Psoas muscle (tissue), 8 donors: ENCODE measurements at regions of chr7 and their contacts with region 1.

Region 1: GRCh38 chr7:41977151-41977651 is 259.8 kb downstream of the GLI3 start:
- DNase-seq: peak in 1 of 2 donors; percentile 63
- ATAC-seq: peak; percentile 92 to 97 (median 96)
- H3K4me3 ChIP-seq: no peak overlapping the region
- H3K27ac ChIP-seq: peak overlapping the region; percentile 70
- H3K4me1 ChIP-seq: peaks cover 40% of the 10 kb centered on the region
- H3K27me3 ChIP-seq: no peaks in the 10 kb centered on the region
- CTCF ChIP-seq: peak; percentile 78

Region 2: GRCh38 chr7:41411411-41412120 is 565.6 kb before region 1 on chr7:
- intact Hi-C with region 1: no loop called
- DNase-seq: no peak
- ATAC-seq: no peak
- H3K4me3 ChIP-seq: no peak overlapping the region
- H3K27ac ChIP-seq: no peak overlapping the region
- H3K4me1 ChIP-seq: no peaks in the 10 kb centered on the region
- H3K27me3 ChIP-seq: no peaks in the 10 kb centered on the region
- CTCF ChIP-seq: no peak

Region 3: DNA sequence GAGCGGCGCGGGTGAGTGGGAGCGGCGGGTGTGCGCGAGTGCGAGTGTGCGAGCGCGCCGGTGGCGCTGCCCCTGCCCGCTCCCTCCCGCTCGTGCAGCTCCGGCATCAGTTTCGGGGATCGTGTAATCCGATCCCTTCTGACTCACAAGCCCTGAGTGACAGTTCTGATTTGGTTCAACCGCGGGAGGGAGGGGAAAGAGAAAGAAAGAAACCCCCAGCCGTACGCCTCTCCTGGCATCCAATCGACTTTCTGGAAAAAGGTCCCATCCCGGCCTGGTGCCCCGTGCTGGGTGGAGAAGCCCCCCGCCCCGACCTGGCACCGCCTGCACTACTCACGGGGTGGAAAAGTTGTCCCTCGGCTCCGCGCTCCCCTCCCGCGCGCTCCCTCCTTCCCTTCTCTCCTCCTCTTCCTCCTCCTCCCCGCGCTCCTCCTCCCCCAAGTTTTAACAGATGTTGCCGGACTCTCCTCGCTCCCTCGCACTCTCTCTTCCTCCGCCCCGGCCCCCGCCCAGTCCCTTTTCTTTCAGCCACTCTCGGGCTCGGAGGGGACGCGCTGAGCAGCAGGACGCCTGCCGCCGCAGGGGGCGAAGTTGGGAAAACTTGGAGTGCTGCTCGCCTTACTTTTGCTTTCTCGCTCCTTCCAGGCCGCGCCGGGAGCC is 260.1 kb after region 1 on chr7 and contains the start of gene GLI3:
- intact Hi-C with region 1: loop called in 1 of 2 experiments (anchors 10 kb)
- DNase-seq: peak; percentile 88 to 91
- ATAC-seq: peak; percentile 85 to 92 (median 88)
- H3K4me3 ChIP-seq: peak within 1 kb of the TSS; percentile 69
- H3K27ac ChIP-seq: peak within 1 kb of the TSS; percentile 81
- H3K4me1 ChIP-seq: peaks cover 10% of the 10 kb centered on the region
- H3K27me3 ChIP-seq: no peaks in the 10 kb centered on the region
- CTCF ChIP-seq: peak; percentile 17
- total RNA-seq, gene GLI3: 3.2 to 4.9 (median 4.1) TPM

Region 4: GRCh38 chr7:42311195-42311594 is 334.0 kb after region 1 on chr7:
- intact Hi-C with region 1: loop called in 1 of 2 experiments (anchors 5 kb)
- DNase-seq: no peak
- ATAC-seq: no peak
- H3K4me3 ChIP-seq: no peak overlapping the region
- H3K27ac ChIP-seq: no peak overlapping the region
- H3K4me1 ChIP-seq: no peaks in the 10 kb centered on the region
- H3K27me3 ChIP-seq: no peaks in the 10 kb centered on the region
- CTCF ChIP-seq: no peak

Region 5: DNA sequence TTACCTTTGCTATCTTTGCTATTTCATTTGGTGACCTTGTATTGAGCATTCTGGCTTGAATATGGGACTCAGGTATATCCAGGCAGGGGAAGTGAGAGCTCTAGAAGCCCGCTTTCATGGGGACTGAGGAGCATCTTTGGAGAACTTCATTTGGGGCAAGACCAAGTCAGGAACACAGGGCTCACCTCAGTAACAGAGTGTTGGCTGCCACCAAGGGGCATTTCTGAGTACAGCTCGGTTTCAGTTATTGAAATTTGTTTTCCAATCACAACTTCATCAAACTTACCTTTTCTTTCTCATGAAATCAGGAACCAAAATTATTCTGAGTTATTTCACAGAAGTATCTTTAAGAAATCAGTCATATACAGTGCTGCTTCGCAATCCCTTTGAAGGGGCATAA is 597.5 kb after region 1 on chr7:
- intact Hi-C with region 1: loop called in 1 of 2 experiments (anchors 10 kb)
- DNase-seq: no peak
- ATAC-seq: no peak
- H3K4me3 ChIP-seq: no peak overlapping the region
- H3K27ac ChIP-seq: no peak overlapping the region
- H3K4me1 ChIP-seq: no peaks in the 10 kb centered on the region
- H3K27me3 ChIP-seq: peaks cover 0 to 4% (median 0%) of the 10 kb centered on the region in 3 donors
- CTCF ChIP-seq: peak; percentile 11

Region 6: DNA sequence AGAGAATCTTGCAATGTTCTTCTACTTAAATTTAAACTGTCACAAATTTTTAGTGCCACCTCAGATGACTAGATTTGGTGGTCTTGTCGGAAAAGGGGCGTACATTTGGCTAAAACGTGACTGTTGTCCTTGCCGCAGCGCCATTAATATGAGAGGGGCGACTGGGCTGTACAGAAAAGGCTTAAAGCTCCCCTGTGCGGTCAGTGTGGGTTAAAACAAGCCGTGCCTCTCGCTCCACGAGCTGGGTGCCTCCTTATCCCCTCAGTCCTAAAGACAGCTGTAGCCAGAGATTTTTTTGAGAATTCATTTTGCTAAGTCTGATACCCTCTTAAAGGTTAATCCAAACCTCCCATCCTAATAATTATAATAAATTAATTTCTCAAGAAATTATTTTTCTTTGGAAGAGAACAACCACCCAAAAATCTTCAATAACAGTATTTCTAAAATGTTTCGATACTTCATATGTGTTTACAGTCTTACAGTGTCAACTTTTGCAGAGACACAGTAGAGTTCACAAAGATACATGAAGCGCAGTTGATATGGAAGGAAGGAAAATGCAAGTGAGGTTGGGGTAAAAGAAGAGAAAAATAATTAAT is 866.1 kb after region 1 on chr7:
- intact Hi-C with region 1: loop called in 1 of 2 experiments (anchors 10 kb)
- DNase-seq: peak in 1 of 2 donors; percentile 52
- ATAC-seq: peak; percentile 65 to 93 (median 83)
- H3K4me3 ChIP-seq: peak overlapping the region; percentile 51
- H3K27ac ChIP-seq: no peak overlapping the region
- H3K4me1 ChIP-seq: no peaks in the 10 kb centered on the region
- H3K27me3 ChIP-seq: peaks cover 0 to 4% (median 0%) of the 10 kb centered on the region in 3 donors
- CTCF ChIP-seq: peak; percentile 51